ENCODE measurements at regions of chr17 and their contacts with region 1.

Region 1: DNA sequence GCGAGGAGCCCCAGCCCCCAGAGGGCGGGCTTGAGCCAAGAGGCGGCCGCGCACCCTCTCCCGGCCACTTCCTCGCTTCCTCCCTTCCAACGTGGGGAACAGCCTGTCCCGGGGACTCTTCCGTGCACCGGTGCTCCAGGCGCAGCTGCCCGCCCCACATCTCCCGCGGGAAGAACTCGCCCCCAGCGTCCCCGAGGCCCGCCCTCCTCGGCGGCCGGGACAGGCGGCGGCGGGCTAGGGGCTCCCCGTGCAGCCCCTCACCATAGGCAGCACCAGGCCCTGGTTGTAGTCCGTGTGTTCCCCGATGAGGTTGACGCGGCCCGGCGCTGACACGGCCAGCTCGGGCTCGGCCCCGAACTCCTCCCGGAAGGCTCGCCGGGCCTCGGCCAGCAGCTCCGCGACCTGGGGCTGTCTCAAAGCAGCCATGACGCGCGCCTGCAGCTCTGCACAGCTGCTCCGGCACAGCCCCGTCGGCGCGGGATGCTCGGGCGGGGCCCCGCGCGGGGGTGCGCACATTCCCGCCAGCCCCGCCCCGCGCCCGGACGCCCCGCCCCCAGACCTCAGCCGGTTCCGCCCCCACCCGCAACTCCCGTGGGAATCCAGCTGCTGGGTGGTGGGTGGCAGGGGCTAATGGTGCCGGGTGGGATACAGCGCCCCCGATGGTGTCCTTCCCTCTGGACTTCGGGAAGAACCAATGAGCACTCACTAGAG is at the start of gene GALK1:
- DNase-seq: peak; percentile 73 to 84
- ATAC-seq: peak; percentile 87 to 94 (median 90)
- H3K4me3 ChIP-seq: peak within 1 kb of the TSS; percentile 33 to 77 (median 71)
- H3K27ac ChIP-seq: peak within 1 kb of the TSS; percentile 81 to 92 (median 85)
- H3K4me1 ChIP-seq: peaks cover 5 to 22% (median 18%) of the 10 kb centered on the region in 9 donors
- H3K27me3 ChIP-seq: no peaks in the 10 kb centered on the region
- CTCF ChIP-seq: peak; percentile 41 to 83 (median 65)
- total RNA-seq, gene GALK1: 5.2 to 26.4 (median 11.3) TPM

Region 2: GRCh38 chr17:76005263-76006149 is 240.6 kb after region 1 on chr17:
- intact Hi-C with region 1: loop called in 1 of 10 experiments (anchors 10 kb)
- DNase-seq: peak; percentile 66 to 78
- ATAC-seq: peak; percentile 35 to 75 (median 64)
- H3K4me3 ChIP-seq: no peak overlapping the region
- H3K27ac ChIP-seq: peak overlapping the region in 3 of 10 donors; percentile 2 to 36 (median 31)
- H3K4me1 ChIP-seq: peaks cover 0 to 15% (median 0%) of the 10 kb centered on the region in 9 donors
- H3K27me3 ChIP-seq: no peaks in the 10 kb centered on the region
- CTCF ChIP-seq: peak; percentile 63 to 80 (median 78)

Region 3: GRCh38 chr17:77019955-77020379 is 1255.1 kb after region 1 on chr17:
- intact Hi-C with region 1: loop called in 1 of 10 experiments (anchors 5 kb)
- DNase-seq: no peak
- ATAC-seq: no peak
- H3K4me3 ChIP-seq: no peak overlapping the region
- H3K27ac ChIP-seq: no peak overlapping the region
- H3K4me1 ChIP-seq: no peaks in the 10 kb centered on the region
- H3K27me3 ChIP-seq: peaks cover 0 to 11% (median 0%) of the 10 kb centered on the region in 7 donors
- CTCF ChIP-seq: no peak

Measured in heart right ventricle (tissue), 16 donors.